HepG2 (cell line): ENCODE measurements at regions of chr12 and their contacts with region 1.

Region 1: GRCh38 chr12:55973598-55974307 is at the start of gene RAB5B:
- DNase-seq: peak; percentile 100
- ATAC-seq: peak; percentile 95
- H3K4me3 ChIP-seq: peak within 1 kb of the TSS; percentile 90 to 99 (median 96)
- H3K27ac ChIP-seq: peak within 1 kb of the TSS; percentile 82
- H3K4me1 ChIP-seq: peaks cover 44% of the 10 kb centered on the region
- H3K27me3 ChIP-seq: no peaks in the 10 kb centered on the region
- CTCF ChIP-seq: 0 out of 2 replicates have a peak, but pooled peaks have one; percentile 10
- EP300 ChIP-seq: no peak
- POLR2A ChIP-seq: peak; percentile 93
- RAD21 ChIP-seq: peak; percentile 42; the same call in 1 of the 2 replicates
- total RNA-seq, gene RAB5B: 26.0 and 33.1 TPM in 2 replicates

Region 2: DNA sequence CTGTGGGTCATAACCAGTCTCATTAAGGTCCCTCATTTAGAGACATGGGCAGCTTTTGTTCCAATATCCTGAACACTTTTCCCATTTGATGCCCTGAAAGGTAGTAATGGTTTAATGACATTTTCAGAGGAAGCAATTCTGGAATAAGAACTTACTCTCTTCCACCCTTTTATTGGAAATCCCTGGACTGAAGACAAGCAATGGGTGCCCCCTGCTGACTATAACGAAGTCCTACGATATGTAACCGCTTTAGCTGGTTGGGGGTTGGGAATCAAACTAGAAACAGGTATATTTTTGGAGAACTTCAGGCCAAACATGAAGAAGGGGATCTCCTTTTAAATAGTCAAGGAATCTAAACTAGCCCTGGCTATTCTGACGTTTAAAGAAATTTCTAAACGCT is 176.7 kb before region 1 on chr12:
- CTCF ChIA-PET with region 1: no interaction called
- POLR2A ChIA-PET with region 1: no interaction called
- in situ Hi-C with region 1: no loop called
- intact Hi-C with region 1: no loop called
- DNase-seq: peak; percentile 51
- ATAC-seq: peak; percentile 43; the same call in 2 of the 3 replicates
- H3K4me3 ChIP-seq: no peak overlapping the region
- H3K27ac ChIP-seq: no peak overlapping the region
- H3K4me1 ChIP-seq: no peaks in the 10 kb centered on the region
- H3K27me3 ChIP-seq: no peaks in the 10 kb centered on the region
- CTCF ChIP-seq: peak; percentile 62
- EP300 ChIP-seq: no peak
- POLR2A ChIP-seq: no peak
- RAD21 ChIP-seq: no peak

Region 3: GRCh38 chr12:55926738-55927587 is 46.8 kb before region 1 on chr12:
- CTCF ChIA-PET with region 1: no interaction called
- POLR2A ChIA-PET with region 1: interaction called, 37 read pairs
- in situ Hi-C with region 1: no loop called
- intact Hi-C with region 1: no loop called
- DNase-seq: peak; percentile 90
- ATAC-seq: peak; percentile 73
- H3K4me3 ChIP-seq: peak overlapping the region; percentile 72 to 90 (median 89)
- H3K27ac ChIP-seq: peak overlapping the region; percentile 96
- H3K4me1 ChIP-seq: peaks cover 58% of the 10 kb centered on the region
- H3K27me3 ChIP-seq: no peaks in the 10 kb centered on the region; a peak in 1 of 5 replicates
- CTCF ChIP-seq: peak; percentile 79
- EP300 ChIP-seq: no peak
- POLR2A ChIP-seq: peak; percentile 56 to 62
- RAD21 ChIP-seq: no peak

Region 4: GRCh38 chr12:55996715-55997534 is 23.2 kb after region 1 on chr12 and contains the start of gene SUOX:
- CTCF ChIA-PET with region 1: no interaction called
- POLR2A ChIA-PET with region 1: interaction called, 60 read pairs
- in situ Hi-C with region 1: no loop called
- intact Hi-C with region 1: no loop called
- DNase-seq: peak; percentile 98
- ATAC-seq: peak; percentile 98
- H3K4me3 ChIP-seq: peak within 1 kb of the TSS; percentile 84 to 88 (median 84)
- H3K27ac ChIP-seq: peak within 1 kb of the TSS; percentile 92
- H3K4me1 ChIP-seq: peaks cover 50% of the 10 kb centered on the region
- H3K27me3 ChIP-seq: peaks cover 0 to 3% of the 10 kb centered on the region in 2 experiments; a peak in 1 of 5 replicates
- CTCF ChIP-seq: peak; percentile 20
- EP300 ChIP-seq: no peak
- POLR2A ChIP-seq: peak; percentile 75 to 86
- RAD21 ChIP-seq: no peak; the same call in 1 of the 2 replicates
- total RNA-seq, gene SUOX: 23.9 and 24.6 TPM in 2 replicates

Region 5: GRCh38 chr12:56014206-56014605 is 40.5 kb after region 1 on chr12:
- CTCF ChIA-PET with region 1: no interaction called
- POLR2A ChIA-PET with region 1: interaction called, 13 read pairs
- in situ Hi-C with region 1: no loop called
- intact Hi-C with region 1: no loop called
- DNase-seq: no peak
- ATAC-seq: no peak
- H3K4me3 ChIP-seq: no peak overlapping the region
- H3K27ac ChIP-seq: peak overlapping the region; percentile 68
- H3K4me1 ChIP-seq: peaks cover 71% of the 10 kb centered on the region
- H3K27me3 ChIP-seq: no peaks in the 10 kb centered on the region
- CTCF ChIP-seq: no peak
- EP300 ChIP-seq: no peak
- POLR2A ChIP-seq: no peak
- RAD21 ChIP-seq: no peak

Region 6: DNA sequence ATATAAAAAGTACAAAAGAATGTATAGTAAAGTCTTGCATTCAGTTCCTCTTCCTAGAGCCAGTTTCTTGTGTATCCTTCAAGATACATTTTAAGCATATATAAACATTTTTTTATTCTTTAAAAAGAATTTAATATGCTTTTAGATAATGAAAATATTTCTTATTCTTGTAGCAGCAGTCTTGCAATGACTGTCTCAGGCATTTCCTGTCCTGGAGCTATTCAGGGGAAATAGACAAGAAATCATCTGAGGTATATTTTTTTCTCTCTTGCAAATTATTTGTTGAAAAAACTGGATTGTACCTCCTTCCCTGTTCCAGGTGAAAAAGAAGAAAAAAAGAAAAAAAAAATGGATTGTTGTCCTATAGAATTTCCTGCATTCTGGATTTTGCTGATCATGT is 89.2 kb after region 1 on chr12:
- CTCF ChIA-PET with region 1: no interaction called
- POLR2A ChIA-PET with region 1: no interaction called
- in situ Hi-C with region 1: no loop called
- intact Hi-C with region 1: no loop called
- DNase-seq: no peak
- ATAC-seq: no peak
- H3K4me3 ChIP-seq: no peak overlapping the region
- H3K27ac ChIP-seq: no peak overlapping the region
- H3K4me1 ChIP-seq: no peaks in the 10 kb centered on the region
- H3K27me3 ChIP-seq: no peaks in the 10 kb centered on the region; a peak in 1 of 5 replicates
- CTCF ChIP-seq: no peak
- EP300 ChIP-seq: no peak
- POLR2A ChIP-seq: no peak
- RAD21 ChIP-seq: no peak

Region 7: DNA sequence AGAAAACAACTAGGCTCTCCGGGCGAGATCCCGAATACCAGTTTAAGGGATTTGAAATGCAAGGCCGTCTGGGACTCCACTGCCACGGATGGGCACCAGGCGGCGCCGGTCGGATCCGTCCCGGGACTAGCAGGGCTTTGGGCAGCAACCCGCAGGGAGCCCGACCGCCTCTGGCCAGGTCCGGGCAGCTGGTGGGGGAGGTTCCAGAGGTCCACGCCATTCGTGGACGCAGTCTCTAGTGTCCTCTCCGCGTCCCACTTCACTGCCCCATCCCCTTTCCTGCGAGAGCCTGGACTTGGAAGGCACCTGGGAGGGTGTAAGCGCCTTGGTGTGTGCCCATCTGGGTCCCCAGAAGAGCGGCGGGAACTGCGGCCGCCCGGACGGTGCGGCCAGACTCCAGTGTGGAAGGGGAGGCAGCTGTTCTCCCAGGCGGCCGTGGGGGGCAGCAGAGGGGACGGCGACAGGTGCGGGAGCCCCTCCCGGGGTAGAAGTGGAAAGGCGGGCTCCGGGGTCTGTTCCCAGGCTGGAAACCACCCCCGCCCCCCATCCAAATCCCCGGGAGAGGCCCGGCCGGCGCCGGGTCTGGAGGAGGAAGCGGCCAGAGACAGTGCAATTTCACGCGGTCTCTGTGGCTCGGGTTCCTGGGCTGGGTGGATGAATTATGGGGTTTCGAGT is 105.4 kb after region 1 on chr12:
- CTCF ChIA-PET with region 1: no interaction called
- POLR2A ChIA-PET with region 1: interaction called, 28 read pairs
- in situ Hi-C with region 1: no loop called
- intact Hi-C with region 1: no loop called
- DNase-seq: peak; percentile 81
- ATAC-seq: peak; percentile 61
- H3K4me3 ChIP-seq: peak overlapping the region; percentile 89 to 96 (median 91)
- H3K27ac ChIP-seq: peak overlapping the region; percentile 99
- H3K4me1 ChIP-seq: peaks cover 49% of the 10 kb centered on the region
- H3K27me3 ChIP-seq: no peaks in the 10 kb centered on the region; a peak in 1 of 5 replicates
- CTCF ChIP-seq: peak; percentile 83
- EP300 ChIP-seq: 0 out of 4 replicates have a peak, but pooled peaks of 1 of the 2 experiments have one; percentile 22
- POLR2A ChIP-seq: peak; percentile 67 to 73; a peak in 3 of 4 replicates
- RAD21 ChIP-seq: peak; percentile 80

Region 8: GRCh38 chr12:56143870-56144269 is 170.1 kb after region 1 on chr12:
- CTCF ChIA-PET with region 1: no interaction called
- POLR2A ChIA-PET with region 1: no interaction called
- in situ Hi-C with region 1: no loop called
- intact Hi-C with region 1: no loop called
- DNase-seq: no peak
- ATAC-seq: no peak
- H3K4me3 ChIP-seq: no peak overlapping the region
- H3K27ac ChIP-seq: no peak overlapping the region
- H3K4me1 ChIP-seq: no peaks in the 10 kb centered on the region
- H3K27me3 ChIP-seq: no peaks in the 10 kb centered on the region
- CTCF ChIP-seq: no peak
- EP300 ChIP-seq: no peak
- POLR2A ChIP-seq: no peak
- RAD21 ChIP-seq: no peak